Pancreas (tissue), 10 donors: ENCODE measurements at regions of chr6 and their contacts with region 1.

Region 1: DNA sequence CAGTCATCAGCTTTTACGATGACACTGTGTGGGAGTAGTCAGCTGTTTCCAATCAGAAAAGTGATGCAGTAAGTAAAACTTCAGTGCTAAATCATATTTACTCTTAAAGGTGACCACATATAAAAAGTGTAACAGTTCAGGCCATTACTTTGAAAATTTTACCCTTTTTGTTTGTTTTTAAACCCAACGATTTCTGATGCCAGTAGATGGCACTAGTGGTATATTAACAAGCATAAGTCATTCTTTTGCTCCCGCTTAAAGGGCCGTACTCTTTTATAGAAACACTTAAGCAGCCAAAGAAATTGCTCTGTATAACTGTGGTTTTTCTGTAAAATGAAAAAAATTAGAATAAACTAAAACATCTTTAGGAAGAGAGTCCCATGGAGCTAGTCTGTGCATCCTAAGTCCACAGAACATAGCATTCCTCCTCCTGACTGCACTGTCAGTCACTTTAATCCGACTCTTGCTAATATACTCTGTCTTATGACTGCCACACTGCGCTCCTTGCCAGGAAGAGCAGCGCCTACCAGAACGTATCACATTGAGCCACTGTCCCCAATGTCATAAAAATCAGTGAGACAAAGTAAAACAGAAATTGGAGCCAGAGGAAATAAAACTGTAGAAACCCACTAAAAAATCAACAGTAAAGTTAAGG is 25.0 kb downstream of the HEBP2 start:
- DNase-seq: no peak
- ATAC-seq: peak; percentile 67 to 84 (median 78)
- H3K4me3 ChIP-seq: no peak overlapping the region
- H3K27ac ChIP-seq: no peak overlapping the region
- H3K4me1 ChIP-seq: no peaks in the 10 kb centered on the region
- H3K27me3 ChIP-seq: no peaks in the 10 kb centered on the region
- CTCF ChIP-seq: peak in 3 of 4 donors; percentile 39 to 44 (median 44)

Region 2: DNA sequence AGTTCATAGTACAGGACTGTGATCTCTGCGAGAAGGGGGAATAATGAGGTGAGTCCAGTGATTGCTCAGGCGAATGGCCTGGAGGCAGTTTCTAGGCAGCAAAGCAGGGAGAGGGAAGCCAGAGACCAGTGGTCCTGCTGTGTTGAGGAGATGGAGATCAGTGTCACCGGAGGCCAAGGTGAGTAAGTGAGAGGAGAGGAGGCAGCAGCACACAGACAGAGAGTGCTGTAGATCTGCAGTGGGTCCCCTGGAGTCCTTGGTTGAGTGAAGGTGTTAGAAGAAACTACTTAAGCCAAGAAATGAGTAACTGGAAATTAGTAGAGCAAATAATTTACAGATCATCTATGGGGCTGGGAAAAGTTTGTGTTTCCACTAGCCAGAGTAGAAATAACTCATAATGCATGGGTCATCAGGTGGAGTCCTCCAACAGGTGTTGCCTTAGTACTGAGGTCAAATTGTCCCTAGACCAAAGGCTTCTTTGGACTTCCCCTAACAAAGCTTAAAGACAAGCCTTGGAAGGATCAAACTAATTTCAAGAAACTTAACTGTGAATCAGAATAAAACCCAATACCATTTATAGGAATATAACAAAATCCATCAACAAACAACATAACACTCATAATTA is 11.5 kb before region 1 on chr6:
- intact Hi-C with region 1: no loop called
- DNase-seq: no peak
- ATAC-seq: no peak
- H3K4me3 ChIP-seq: no peak overlapping the region
- H3K27ac ChIP-seq: no peak overlapping the region
- H3K4me1 ChIP-seq: no peaks in the 10 kb centered on the region
- H3K27me3 ChIP-seq: no peaks in the 10 kb centered on the region
- CTCF ChIP-seq: no peak

Region 3: DNA sequence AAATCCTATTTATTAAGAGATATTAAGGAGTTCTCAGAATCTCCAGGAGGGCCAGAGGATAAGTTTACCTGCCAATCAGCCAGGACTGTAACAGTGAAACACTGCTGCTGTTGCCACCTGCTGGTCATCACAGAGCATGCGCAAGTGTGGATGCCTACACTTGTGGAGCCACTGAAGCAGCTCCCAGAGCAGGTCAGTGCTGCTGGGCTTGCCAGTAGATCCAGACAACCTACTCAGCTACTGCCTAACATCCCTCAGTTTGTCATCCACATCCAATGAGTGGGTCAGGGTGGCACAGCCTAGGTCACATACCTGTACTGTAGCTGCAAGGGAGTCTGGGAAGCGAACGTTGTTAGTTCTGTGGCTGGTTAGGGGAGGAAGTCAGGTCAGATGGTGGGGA is 88.6 kb after region 1 on chr6:
- intact Hi-C with region 1: loop called in 2 of 3 experiments (anchors 5 kb)
- DNase-seq: peak in 2 of 6 donors; percentile 33 to 48
- ATAC-seq: peak in 3 of 4 donors; percentile 63 to 85 (median 85)
- H3K4me3 ChIP-seq: no peak overlapping the region
- H3K27ac ChIP-seq: no peak overlapping the region
- H3K4me1 ChIP-seq: no peaks in the 10 kb centered on the region
- H3K27me3 ChIP-seq: no peaks in the 10 kb centered on the region
- CTCF ChIP-seq: peak; percentile 30 to 36 (median 32)

Region 4: DNA sequence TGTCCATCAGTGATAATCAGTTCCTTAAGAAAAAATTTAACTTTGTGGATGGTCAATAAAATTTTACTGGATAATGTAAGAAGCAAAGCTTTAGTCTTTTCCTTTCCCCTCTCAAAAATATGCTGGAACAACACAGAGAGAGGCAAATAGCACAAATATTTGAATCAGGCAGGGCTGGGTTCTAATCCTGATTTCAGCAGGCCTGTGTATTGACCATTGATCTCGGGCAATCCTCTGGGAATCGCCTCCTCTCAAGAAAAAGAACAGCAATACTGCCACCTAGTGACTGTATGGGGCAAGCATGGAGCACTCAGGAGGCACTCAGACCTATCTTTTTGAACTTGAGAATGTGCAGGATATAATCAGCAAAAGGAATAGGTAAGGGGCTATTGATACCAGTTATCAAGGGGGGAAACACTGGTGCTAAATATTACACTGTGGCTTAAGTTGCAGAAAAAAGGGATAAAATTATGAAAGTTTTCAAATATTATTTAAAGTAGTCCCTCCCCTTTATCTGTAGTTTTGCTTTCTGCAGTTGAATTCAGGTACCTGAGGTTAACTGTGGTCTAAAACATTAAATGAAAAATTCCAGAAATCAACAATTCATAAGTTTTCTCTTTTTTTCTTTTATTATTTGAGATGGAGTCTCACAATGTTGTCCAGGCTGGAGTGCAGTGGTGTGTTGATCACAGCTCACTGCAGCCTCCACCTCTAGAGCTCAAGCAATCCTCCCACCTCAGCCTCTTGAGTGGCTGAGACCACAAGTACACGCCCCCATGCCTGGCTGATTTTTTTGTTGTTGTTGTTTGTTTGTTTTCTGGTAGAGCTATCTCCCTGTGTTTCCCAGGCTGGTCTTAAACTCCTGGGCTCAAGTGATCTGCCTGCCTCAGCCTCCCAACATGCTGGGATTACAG is 162.0 kb after region 1 on chr6:
- intact Hi-C with region 1: loop called in 1 of 3 experiments (anchors 10 kb)
- DNase-seq: peak in 4 of 6 donors; percentile 47 to 73 (median 48)
- ATAC-seq: peak; percentile 65 to 86 (median 76)
- H3K4me3 ChIP-seq: no peak overlapping the region
- H3K27ac ChIP-seq: no peak overlapping the region
- H3K4me1 ChIP-seq: no peaks in the 10 kb centered on the region
- H3K27me3 ChIP-seq: no peaks in the 10 kb centered on the region
- CTCF ChIP-seq: peak; percentile 52 to 85 (median 78)